ENCODE measurements at regions of chr6 and their contacts with region 1.

Region 1: GRCh38 chr6:95017922-95018321 is 559.4 kb upstream of the MANEA start:
- DNase-seq: no peak
- ATAC-seq: no peak
- H3K4me3 ChIP-seq: no peak overlapping the region
- H3K27ac ChIP-seq: no peak overlapping the region
- H3K4me1 ChIP-seq: no peaks in the 10 kb centered on the region
- H3K27me3 ChIP-seq: no peaks in the 10 kb centered on the region
- CTCF ChIP-seq: no peak
- EP300 ChIP-seq: no peak
- POLR2A ChIP-seq: no peak
- RAD21 ChIP-seq: no peak

Region 2: DNA sequence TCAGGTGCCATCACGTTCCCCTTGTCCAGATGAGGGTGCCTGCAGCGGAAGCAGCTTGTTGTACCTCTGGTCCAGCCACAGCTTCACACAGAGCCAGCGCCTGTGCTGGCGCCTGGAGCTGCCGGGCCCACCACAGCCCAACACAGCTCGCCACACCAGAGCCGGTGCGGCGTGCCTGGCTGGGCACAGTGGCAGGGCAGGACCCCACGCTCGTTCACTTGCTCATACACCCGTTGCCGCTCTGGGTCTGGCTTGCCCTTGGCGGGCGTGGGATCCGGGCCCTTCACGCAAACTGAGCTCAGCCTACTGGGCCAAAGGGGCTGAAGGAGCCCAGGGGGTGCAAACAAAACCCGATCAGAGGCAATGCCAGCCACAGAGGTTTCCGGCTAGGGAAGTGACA is 66.9 kb after region 1 on chr6:
- CTCF ChIA-PET with region 1: no interaction called
- POLR2A ChIA-PET with region 1: no interaction called
- in situ Hi-C with region 1: loop called (anchors 5 kb)
- intact Hi-C with region 1: no loop called
- DNase-seq: no peak
- ATAC-seq: no peak
- H3K4me3 ChIP-seq: no peak overlapping the region
- H3K27ac ChIP-seq: no peak overlapping the region
- H3K4me1 ChIP-seq: no peaks in the 10 kb centered on the region
- H3K27me3 ChIP-seq: no peaks in the 10 kb centered on the region
- CTCF ChIP-seq: no peak
- EP300 ChIP-seq: no peak
- POLR2A ChIP-seq: no peak
- RAD21 ChIP-seq: no peak

Region 3: GRCh38 chr6:95266537-95267258 is 248.8 kb after region 1 on chr6:
- CTCF ChIA-PET with region 1: no interaction called
- POLR2A ChIA-PET with region 1: no interaction called
- in situ Hi-C with region 1: no loop called
- intact Hi-C with region 1: no loop called
- DNase-seq: no peak
- ATAC-seq: no peak
- H3K4me3 ChIP-seq: no peak overlapping the region
- H3K27ac ChIP-seq: no peak overlapping the region
- H3K4me1 ChIP-seq: no peaks in the 10 kb centered on the region
- H3K27me3 ChIP-seq: no peaks in the 10 kb centered on the region
- CTCF ChIP-seq: no peak
- EP300 ChIP-seq: no peak
- POLR2A ChIP-seq: no peak
- RAD21 ChIP-seq: no peak

Region 4: GRCh38 chr6:95658886-95659285 is 641.0 kb after region 1 on chr6:
- CTCF ChIA-PET with region 1: no interaction called
- POLR2A ChIA-PET with region 1: no interaction called
- in situ Hi-C with region 1: no loop called
- intact Hi-C with region 1: no loop called
- DNase-seq: no peak
- ATAC-seq: no peak
- H3K4me3 ChIP-seq: no peak overlapping the region
- H3K27ac ChIP-seq: no peak overlapping the region
- H3K4me1 ChIP-seq: no peaks in the 10 kb centered on the region
- H3K27me3 ChIP-seq: no peaks in the 10 kb centered on the region
- CTCF ChIP-seq: no peak
- EP300 ChIP-seq: no peak
- POLR2A ChIP-seq: no peak
- RAD21 ChIP-seq: no peak

Measured in K562 (cell line).